ENCODE measurements at regions of chr11 and their contacts with region 1.

Region 1: GRCh38 chr11:49533204-49533603 is 324.8 kb upstream of the FOLH1 start:
- DNase-seq: no peak
- H3K4me3 Mint-ChIP-seq: no peak overlapping the region
- H3K27ac Mint-ChIP-seq: no peak overlapping the region
- H3K4me1 Mint-ChIP-seq: no peaks in the 10 kb centered on the region
- H3K27me3 Mint-ChIP-seq: no peaks in the 10 kb centered on the region
- CTCF ChIP-seq: no peak

Region 2: DNA sequence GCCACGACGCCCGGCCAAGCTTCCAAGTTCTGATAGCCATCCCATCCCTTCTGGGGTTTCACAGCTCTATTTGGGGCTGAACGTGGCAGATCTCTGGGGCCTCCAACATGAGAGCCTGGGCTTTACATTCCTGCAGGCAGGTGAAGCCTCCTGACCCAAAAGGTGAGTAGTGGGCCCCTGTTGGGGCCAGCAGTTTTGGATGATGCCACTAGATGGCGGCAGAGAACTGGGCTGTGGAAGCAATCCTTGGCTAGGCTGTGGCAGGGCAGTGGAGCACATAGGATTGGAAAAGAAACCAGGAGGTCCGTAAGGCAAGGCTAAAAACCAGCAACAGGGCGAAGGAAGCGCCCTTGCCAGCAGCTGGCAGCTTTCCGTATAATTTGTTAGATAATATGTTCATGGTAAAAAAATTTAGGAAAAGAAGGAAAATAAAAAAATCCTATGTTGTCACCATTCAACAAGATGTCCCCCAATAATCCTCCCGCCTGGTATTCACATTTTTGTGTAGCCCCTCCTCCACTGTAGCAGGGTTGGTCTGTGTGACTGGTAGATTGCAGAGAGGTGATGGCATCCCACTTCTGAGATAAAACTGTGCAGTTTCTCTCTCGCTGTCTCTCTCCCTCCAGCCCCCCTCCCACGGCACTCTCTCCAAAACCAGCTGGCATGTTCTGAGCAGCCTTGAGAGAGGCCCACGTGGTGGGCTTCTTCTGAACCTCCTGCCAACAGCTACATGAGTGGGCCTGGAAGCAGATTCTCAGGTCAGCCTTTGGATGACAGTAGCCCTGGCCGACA is 1360.2 kb before region 1 on chr11:
- CTCF ChIA-PET with region 1: no interaction called
- intact Hi-C with region 1: loop called (anchors 10 kb)
- DNase-seq: peak; percentile 75
- H3K4me3 Mint-ChIP-seq: no peak overlapping the region
- H3K27ac Mint-ChIP-seq: no peak overlapping the region
- H3K4me1 Mint-ChIP-seq: no peaks in the 10 kb centered on the region
- H3K27me3 Mint-ChIP-seq: peaks cover 5% of the 10 kb centered on the region
- CTCF ChIP-seq: peak; percentile 91

Region 3: DNA sequence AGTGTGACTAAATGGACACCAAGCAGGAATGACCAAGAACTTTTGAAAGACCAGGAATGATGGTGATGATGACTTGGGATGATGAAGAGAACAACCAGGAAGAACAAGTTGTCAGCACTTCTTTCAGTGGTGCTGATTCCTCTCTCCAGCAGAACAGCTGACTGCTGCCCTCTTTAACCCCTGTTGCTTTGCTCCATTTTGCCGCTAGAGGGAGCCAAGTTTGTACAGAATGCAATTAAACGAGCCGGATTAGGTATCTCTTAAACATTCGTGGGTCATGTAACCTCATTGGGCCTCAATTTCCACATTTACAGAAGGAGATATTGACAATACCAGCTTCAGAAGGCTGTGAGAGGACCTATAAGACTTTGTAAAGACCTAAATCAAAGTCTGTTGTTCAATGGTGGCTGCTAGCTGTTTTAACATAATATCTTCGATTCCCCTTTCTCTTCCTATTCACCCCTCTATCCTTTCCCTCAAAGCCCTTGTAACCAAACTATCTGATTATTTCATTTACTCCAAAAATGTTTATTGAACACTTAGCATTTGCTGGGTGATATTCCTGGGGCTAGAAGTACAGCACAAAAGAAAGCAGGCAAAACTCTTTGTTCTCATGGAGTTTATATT is 1225.3 kb before region 1 on chr11:
- CTCF ChIA-PET with region 1: no interaction called
- intact Hi-C with region 1: loop called (anchors 10 kb)
- DNase-seq: peak; percentile 73
- H3K4me3 Mint-ChIP-seq: no peak overlapping the region
- H3K27ac Mint-ChIP-seq: no peak overlapping the region
- H3K4me1 Mint-ChIP-seq: no peaks in the 10 kb centered on the region
- H3K27me3 Mint-ChIP-seq: no peaks in the 10 kb centered on the region
- CTCF ChIP-seq: peak; percentile 76

Region 4: GRCh38 chr11:49230511-49230910 is 302.7 kb before region 1 on chr11:
- CTCF ChIA-PET with region 1: no interaction called
- intact Hi-C with region 1: loop called (anchors 5 kb)
- DNase-seq: no peak
- H3K4me3 Mint-ChIP-seq: no peak overlapping the region
- H3K27ac Mint-ChIP-seq: no peak overlapping the region
- H3K4me1 Mint-ChIP-seq: peaks cover 10% of the 10 kb centered on the region
- H3K27me3 Mint-ChIP-seq: peaks cover 27% of the 10 kb centered on the region
- CTCF ChIP-seq: no peak